ENCODE measurements at regions of chr3 and their contacts with region 1.

Region 1: DNA sequence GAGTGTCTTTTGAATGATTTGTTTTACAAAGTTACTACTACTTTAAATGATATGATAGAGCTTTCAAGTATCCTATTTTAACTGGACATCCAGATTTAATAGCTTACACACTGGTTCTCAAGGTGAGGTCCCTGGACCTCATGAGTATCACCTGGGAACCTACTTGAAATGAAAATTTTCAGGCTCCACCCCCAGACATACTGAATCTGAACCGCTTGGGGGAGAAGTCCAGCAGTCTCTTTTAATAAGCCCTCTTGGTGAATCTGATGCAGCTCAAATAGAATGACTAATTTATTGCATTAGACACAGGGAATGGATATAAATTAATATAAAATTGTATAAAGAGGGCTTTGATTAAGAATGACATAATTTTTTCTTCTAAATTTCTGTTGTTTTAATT is 29.4 kb upstream of the SLITRK3 start:
- DNase-seq: no peak
- ATAC-seq: no peak
- H3K4me3 ChIP-seq: no peak overlapping the region
- H3K27ac ChIP-seq: no peak overlapping the region
- H3K4me1 ChIP-seq: no peaks in the 10 kb centered on the region
- H3K27me3 ChIP-seq: no peaks in the 10 kb centered on the region
- CTCF ChIP-seq: no peak

Region 2: GRCh38 chr3:165169368-165169767 is 56.2 kb before region 1 on chr3:
- intact Hi-C with region 1: no loop called
- DNase-seq: no peak
- ATAC-seq: no peak
- H3K4me3 ChIP-seq: no peak overlapping the region
- H3K27ac ChIP-seq: no peak overlapping the region
- H3K4me1 ChIP-seq: no peaks in the 10 kb centered on the region
- H3K27me3 ChIP-seq: peaks cover 0 to 8% (median 0%) of the 10 kb centered on the region in 7 donors
- CTCF ChIP-seq: no peak

Region 3: DNA sequence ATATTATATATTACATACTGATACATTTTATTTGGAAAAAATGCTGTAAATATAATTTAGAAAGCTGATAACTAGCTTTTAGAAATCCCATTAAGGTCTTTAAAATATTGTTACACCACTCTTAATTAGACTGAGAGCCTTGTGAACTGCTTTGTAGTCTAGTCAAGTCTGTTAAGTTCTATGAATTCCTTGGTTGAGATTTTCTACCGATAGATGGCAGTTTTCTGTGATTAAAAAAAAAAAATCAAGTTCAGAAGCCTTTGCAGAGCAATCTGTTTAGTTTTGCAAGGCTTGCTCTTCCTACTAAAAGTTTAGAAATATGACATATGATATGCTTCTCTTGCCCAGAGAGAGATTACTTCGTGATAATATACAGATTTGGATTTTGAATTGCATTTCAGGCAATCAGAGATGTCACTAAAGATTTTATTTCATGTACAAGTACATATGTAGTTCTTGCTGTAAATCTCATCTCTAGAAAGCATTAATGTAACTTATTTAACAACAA is 31.0 kb after region 1 on chr3:
- intact Hi-C with region 1: loop called in 1 of 10 experiments (anchors 2 kb)
- DNase-seq: no peak
- ATAC-seq: no peak
- H3K4me3 ChIP-seq: no peak overlapping the region
- H3K27ac ChIP-seq: no peak overlapping the region
- H3K4me1 ChIP-seq: no peaks in the 10 kb centered on the region
- H3K27me3 ChIP-seq: no peaks in the 10 kb centered on the region
- CTCF ChIP-seq: no peak